Gastrocnemius medialis (tissue), 4 donors: ENCODE measurements at regions of chr9 and their contacts with region 1.

Region 1: DNA sequence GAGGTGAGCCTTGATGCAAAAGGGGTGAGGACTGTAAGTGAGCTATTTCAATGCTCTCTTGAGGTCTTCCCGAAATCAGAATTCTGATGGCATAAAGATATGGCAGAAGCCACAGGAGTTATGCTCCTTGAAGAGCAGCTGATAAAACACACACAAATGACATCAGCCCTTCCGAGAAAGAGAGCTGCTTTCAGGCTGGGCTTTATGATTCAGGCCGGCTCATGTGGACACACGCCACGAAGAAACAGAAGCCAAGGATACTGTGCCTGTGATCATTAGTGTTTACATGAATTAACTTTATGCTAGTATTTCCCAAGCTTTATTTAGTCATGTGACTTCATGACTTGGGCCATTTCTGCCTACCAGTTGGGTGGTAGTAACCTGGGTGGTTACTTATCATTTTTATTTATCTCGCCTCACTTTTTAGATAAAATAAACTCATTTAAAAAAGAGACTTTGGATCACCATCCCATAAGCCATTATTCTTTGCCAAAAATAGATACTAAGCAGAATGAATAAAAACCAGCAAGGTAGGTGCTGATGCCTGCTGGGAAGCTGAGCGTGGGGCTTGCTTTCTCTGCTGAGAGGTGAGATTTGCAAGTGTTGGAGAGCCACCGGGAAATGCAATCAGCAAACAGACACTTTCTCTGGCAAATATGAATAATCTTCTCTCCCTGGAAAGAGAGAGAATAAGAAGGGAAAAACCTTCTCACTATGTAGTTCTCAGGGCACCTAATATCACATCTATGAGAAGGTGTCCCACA is 73.0 kb upstream of the SLC25A51 start:
- DNase-seq: no peak
- ATAC-seq: no peak
- H3K4me3 ChIP-seq: no peak overlapping the region
- H3K27ac ChIP-seq: no peak overlapping the region
- H3K4me1 ChIP-seq: no peaks in the 10 kb centered on the region
- H3K27me3 ChIP-seq: no peaks in the 10 kb centered on the region
- CTCF ChIP-seq: no peak
- POLR2A ChIP-seq: no peak

Region 2: GRCh38 chr9:37650873-37651768 is 325.8 kb before region 1 on chr9 and contains the start of gene FRMPD1:
- in situ Hi-C with region 1: no loop called
- intact Hi-C with region 1: no loop called
- DNase-seq: peak in 1 of 2 donors; percentile 42
- ATAC-seq: peak; percentile 82 to 84
- H3K4me3 ChIP-seq: peak within 1 kb of the TSS; percentile 65 to 93 (median 76)
- H3K27ac ChIP-seq: peak within 1 kb of the TSS; percentile 42 to 69 (median 58)
- H3K4me1 ChIP-seq: peaks cover 10 to 12% of the 10 kb centered on the region in 2 donors
- H3K27me3 ChIP-seq: no peaks in the 10 kb centered on the region
- CTCF ChIP-seq: peak in 1 of 5 experiments; percentile 21
- POLR2A ChIP-seq: no peak
- total RNA-seq, gene FRMPD1: 0.46 to 1.7 (median 1.0) TPM

Region 3: DNA sequence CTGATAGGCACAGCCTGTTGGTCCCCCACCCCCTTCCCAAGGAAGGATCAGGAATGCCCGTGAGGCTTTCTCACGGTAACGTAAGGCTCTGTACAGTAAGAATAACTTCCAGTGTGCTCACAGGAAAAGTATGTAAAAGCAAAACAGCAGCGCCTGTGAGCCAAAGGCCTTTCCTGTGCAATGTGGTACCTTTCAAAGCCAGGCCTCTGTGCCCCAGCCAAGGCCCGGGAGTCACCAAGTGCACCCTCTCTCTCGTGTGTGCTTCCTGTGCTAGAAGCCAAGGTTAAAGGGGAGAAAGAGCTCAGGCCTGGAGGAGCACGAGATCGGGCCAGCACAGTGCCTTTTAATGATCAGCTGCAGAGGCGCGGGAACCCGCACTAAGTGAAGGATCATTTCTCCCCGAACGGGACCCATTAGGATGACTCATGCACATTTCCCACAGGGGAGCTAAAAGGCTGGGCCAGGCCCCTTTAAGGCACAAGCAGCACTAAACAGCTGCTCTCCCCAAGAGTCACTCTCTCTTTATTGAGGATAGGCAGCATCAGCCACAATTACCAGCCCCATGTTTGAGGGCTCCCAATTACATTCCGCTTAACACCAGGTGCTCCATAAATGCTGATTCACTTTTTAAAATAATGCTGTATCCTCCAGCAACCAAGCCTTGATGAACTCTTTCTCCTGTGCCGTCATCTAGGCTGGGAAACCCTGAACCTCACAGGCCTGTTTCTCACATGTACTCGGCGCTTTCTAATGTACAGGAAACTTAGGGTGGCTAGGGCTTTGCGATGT is 49.3 kb after region 1 on chr9:
- in situ Hi-C with region 1: no loop called
- intact Hi-C with region 1: loop called (anchors 5 kb)
- DNase-seq: no peak
- ATAC-seq: peak; percentile 51 to 60
- H3K4me3 ChIP-seq: no peak overlapping the region
- H3K27ac ChIP-seq: peak overlapping the region; percentile 35 to 44 (median 40)
- H3K4me1 ChIP-seq: peaks cover 28 to 43% of the 10 kb centered on the region in 2 donors
- H3K27me3 ChIP-seq: no peaks in the 10 kb centered on the region
- CTCF ChIP-seq: no peak
- POLR2A ChIP-seq: no peak

Region 4: GRCh38 chr9:38068866-38069629 is 92.2 kb after region 1 on chr9 and contains the start of gene SHB:
- in situ Hi-C with region 1: no loop called
- intact Hi-C with region 1: no loop called
- DNase-seq: peak; percentile 70 to 76
- ATAC-seq: peak; percentile 71 to 72
- H3K4me3 ChIP-seq: peak within 1 kb of the TSS; percentile 85 to 99 (median 92)
- H3K27ac ChIP-seq: peak within 1 kb of the TSS; percentile 89 to 97 (median 94)
- H3K4me1 ChIP-seq: peaks cover 11 to 21% of the 10 kb centered on the region in 2 donors
- H3K27me3 ChIP-seq: no peaks in the 10 kb centered on the region
- CTCF ChIP-seq: peak in 4 of 5 experiments; percentile 29 to 47 (median 37)
- POLR2A ChIP-seq: peak; percentile 88 to 91
- total RNA-seq, gene SHB: 1.2 to 6.1 (median 4.6) TPM

Region 5: DNA sequence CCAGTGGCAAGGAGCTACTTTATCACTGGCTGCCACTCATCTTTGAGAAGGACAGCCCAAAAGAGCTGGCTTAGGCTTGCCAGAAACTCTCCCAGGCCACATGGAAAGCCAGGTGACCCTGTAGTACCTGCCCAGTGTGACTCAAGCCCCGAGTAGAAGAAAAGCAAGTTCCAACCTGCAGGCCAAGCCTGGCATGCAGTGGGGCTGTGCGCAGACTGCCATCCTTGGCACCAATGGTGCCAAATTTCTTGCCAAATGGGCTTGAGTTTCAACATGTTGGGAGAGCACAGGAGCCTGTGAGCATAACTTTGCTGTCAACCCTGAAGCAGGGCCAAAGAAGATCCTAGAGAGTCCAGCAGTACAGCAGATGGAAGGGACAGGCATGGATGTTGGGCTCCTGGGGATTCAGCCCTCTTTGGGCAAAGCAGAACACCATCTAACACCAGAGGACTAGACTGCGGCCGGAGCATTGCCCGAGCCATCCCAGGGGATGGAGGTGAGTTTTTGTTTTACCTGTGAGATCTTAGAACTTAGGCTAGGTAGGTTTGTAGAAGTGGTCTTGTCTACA is 119.4 kb after region 1 on chr9:
- in situ Hi-C with region 1: no loop called
- intact Hi-C with region 1: no loop called
- DNase-seq: peak; percentile 70 to 89
- ATAC-seq: peak; percentile 96 to 97
- H3K4me3 ChIP-seq: no peak overlapping the region
- H3K27ac ChIP-seq: peak overlapping the region in 1 of 4 donors; percentile 58
- H3K4me1 ChIP-seq: no peaks in the 10 kb centered on the region
- H3K27me3 ChIP-seq: no peaks in the 10 kb centered on the region
- CTCF ChIP-seq: no peak
- POLR2A ChIP-seq: no peak